AG04450 (cell line): ENCODE measurements at regions of chr11 and their contacts with region 1.

Region 1: DNA sequence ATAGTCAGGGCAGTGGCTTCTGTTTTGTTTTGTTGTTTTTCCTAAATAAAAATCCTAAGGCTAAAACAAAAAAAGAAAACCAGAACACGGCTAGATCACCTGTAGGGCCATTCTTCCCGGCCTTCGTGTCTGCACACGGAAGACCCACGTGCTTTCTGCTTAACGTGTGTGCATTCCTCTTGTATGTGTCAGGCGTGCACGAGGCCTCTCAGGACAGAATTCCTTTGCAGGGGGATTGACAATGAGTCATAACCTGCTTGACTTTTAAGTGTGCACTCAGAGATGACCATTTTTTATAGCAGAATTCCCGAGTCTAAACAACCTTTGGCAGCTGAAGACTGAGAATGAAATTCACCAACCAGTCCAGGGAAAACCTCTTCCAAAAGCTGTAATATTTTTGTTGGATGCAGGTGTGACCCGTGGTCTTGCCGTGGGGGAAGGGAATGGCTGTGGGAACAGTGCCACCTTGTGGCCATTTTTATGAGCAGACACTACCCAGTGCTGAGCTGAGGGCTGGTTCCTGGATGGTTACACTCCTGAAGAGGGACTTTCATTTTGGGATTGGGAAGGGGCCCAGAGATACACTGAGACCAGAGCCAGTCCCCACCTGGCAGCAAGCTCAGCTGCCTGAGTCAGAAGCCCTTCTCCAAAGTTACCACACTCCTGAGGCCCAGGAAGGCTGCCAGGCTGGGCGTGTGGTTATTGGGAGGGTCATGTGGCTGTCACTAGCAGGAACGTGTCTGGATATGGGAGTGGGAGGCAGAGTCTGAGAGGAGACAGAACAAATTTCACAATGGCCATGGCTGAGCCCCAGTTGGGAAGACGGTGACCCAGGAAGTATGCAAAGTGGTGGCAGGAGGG is 35.8 kb upstream of the DKK3 start:
- DNase-seq: peak; percentile 94
- H3K4me3 ChIP-seq: peak overlapping the region; percentile 49
- H3K27ac ChIP-seq: peak overlapping the region; percentile 96
- H3K27me3 ChIP-seq: no peaks in the 10 kb centered on the region
- CTCF ChIP-seq: peak; percentile 91

Region 2: GRCh38 chr11:11798586-11799438 is 245.4 kb before region 1 on chr11:
- CTCF ChIA-PET with region 1: interaction called, 34 read pairs
- POLR2A ChIA-PET with region 1: interaction called, 4 read pairs
- DNase-seq: peak; percentile 38
- H3K4me3 ChIP-seq: no peak overlapping the region
- H3K27ac ChIP-seq: no peak overlapping the region
- H3K27me3 ChIP-seq: peaks cover 3% of the 10 kb centered on the region
- CTCF ChIP-seq: peak; percentile 98

Region 3: DNA sequence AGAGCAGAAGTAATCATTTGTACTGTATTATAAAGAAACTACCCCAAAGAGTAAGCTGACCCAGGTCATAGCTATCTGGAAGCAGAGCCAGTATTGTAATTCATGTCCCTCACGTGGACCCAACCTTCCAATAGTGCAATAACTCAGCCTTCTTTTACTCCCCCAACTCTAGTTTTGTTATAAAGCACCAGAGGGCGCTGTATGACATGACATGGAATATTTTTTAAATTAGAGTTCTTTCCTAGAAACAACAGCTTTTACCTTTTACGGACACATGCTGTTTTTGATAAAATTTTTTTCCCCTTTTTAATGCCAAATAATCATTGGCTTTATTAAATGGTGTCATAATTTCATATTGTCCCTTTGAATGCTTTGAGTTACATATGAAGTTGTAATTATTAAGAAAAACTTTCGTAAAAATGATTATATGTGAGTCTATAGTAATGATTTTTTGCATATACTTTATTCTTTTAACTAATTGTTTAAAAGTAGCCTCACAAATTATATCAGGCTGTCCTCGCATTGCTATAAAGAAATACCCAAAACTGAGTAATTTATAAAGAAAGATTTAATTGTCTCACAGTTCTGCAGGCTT is 112.6 kb before region 1 on chr11:
- CTCF ChIA-PET with region 1: interaction called, 38 read pairs
- POLR2A ChIA-PET with region 1: interaction called, 4 read pairs
- DNase-seq: peak; percentile 18
- H3K4me3 ChIP-seq: no peak overlapping the region
- H3K27ac ChIP-seq: no peak overlapping the region
- H3K27me3 ChIP-seq: no peaks in the 10 kb centered on the region
- CTCF ChIP-seq: peak; percentile 72

Region 4: DNA sequence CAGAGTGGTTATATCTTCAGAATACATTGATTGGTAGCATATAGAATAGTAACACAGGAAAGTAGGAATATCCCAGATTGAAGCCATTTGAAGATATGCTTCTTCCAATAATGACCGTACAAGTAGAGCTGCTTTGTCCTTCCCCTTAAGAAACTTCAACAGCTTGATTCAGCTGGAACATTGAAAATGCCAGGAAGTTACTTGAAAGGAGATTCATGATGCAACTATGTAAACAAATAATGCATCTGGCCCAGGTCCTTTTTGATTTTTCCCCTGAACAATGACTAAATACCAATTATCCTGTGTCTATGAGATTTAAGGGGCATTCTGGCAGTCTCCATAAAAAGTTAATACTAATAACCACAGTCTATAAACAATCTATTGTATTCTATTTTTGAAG is 38.7 kb before region 1 on chr11:
- CTCF ChIA-PET with region 1: interaction called, 12 read pairs
- POLR2A ChIA-PET with region 1: interaction called, 3 read pairs
- DNase-seq: peak; percentile 62
- H3K4me3 ChIP-seq: peak overlapping the region; percentile 32
- H3K27ac ChIP-seq: peak overlapping the region; percentile 25
- H3K27me3 ChIP-seq: no peaks in the 10 kb centered on the region
- CTCF ChIP-seq: no peak

Region 5: GRCh38 chr11:12235947-12236743 is 192.0 kb after region 1 on chr11:
- CTCF ChIA-PET with region 1: interaction called, 32 read pairs
- POLR2A ChIA-PET with region 1: no interaction called
- DNase-seq: peak; percentile 43
- H3K4me3 ChIP-seq: no peak overlapping the region
- H3K27ac ChIP-seq: peak overlapping the region; percentile 65
- H3K27me3 ChIP-seq: no peaks in the 10 kb centered on the region
- CTCF ChIP-seq: peak; percentile 70

Region 6: DNA sequence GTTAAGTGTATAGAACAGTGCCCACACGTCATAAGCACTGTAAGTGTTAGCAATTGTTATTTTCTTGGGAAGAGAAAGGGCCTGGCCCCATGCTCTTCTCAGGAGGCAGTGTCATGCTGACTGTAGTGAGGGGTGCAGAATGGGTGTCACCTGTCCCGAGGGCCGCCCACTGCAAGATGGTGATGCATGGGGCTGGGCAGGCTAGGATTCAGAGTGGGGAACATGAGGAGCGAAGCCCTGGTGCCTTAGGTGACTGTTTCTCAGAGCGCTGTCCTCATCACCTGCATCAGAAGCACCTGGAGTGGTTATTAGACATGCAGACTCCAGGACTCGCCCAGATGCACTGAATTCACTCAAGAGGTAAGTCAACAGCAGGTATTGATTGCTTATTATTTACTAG is 232.2 kb after region 1 on chr11:
- CTCF ChIA-PET with region 1: interaction called, 205 read pairs
- POLR2A ChIA-PET with region 1: interaction called, 5 read pairs
- DNase-seq: no peak
- H3K4me3 ChIP-seq: no peak overlapping the region
- H3K27ac ChIP-seq: no peak overlapping the region
- H3K27me3 ChIP-seq: no peaks in the 10 kb centered on the region
- CTCF ChIP-seq: no peak